Activated naive CD4-positive, alpha-beta T cell treated with anti-CD3 and anti-CD28 coated beads for 36 hours (primary cell): ENCODE measurements at regions of chr2 and their contacts with region 1.

Region 1: DNA sequence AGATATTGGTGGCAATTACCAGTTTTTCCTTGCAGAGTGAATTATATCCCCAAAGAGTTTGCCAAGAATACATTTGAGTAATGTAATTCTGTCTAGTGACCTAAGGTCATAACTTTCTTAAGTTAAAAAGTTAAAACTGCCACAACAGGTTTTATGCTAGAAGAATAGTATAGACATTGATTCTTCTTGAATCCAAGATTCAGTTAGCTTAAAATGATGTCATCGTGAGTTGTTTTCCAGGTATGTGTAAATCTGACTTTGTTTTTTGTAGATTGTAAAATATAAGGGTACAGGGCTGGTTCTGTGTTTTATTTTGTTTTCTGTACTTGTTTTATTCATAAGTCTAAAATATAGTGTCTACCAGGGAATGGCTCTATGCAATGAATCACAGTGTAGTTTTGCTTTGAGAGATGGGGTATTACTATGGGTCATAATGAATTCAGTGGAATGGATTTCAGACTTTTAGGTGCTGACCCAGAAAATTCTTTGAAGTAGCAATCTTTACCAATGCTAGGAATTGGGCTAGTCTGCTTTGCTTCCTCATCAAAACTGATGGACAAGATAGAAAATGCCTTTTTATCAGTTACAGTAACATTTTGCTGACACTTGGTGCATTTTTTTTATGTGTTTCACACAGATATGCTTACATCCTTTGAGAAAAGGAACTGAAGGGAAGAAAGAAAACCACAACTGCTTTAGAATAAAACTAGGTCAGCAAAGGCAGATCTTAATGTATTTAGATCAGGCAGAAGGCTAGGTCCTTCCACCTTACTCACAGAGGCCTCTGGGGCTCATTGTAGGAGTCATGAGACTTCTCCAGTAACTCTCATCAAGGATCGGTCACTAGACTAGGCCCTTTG is 20.8 kb upstream of the MGAT5 start:
- DNase-seq: peak; percentile 47
- H3K4me3 Mint-ChIP-seq: no peak overlapping the region
- H3K27ac Mint-ChIP-seq: peak overlapping the region; percentile 80
- H3K4me1 Mint-ChIP-seq: peaks cover 70% of the 10 kb centered on the region
- H3K27me3 Mint-ChIP-seq: no peaks in the 10 kb centered on the region

Region 2: GRCh38 chr2:134127496-134127895 is 105.6 kb before region 1 on chr2:
- CTCF ChIA-PET with region 1: no interaction called
- intact Hi-C with region 1: loop called (anchors 2 kb)
- DNase-seq: peak; percentile 84
- H3K4me3 Mint-ChIP-seq: no peak overlapping the region
- H3K27ac Mint-ChIP-seq: no peak overlapping the region
- H3K4me1 Mint-ChIP-seq: peaks cover 61% of the 10 kb centered on the region
- H3K27me3 Mint-ChIP-seq: no peaks in the 10 kb centered on the region

Region 3: DNA sequence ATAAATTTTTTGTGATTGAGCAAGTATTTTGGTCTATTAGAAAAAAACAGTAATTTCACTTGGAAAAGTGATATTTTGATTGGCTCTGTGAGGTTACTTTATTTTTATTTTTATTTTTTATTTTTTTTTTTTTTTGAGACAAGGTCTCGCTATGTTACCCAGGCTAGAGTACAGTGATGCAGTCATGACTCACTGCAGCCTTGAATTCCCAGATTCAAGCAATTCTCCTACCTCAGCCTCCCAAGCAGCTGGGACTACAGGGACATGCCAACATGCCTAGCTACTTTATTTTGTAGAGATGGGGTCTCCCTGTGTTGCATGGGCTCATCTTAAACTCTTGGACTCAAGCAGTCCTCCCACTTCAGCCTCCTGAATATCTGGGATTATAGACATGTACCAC is 40.1 kb before region 1 on chr2:
- CTCF ChIA-PET with region 1: interaction called, 4 read pairs
- intact Hi-C with region 1: loop called (anchors 1 kb)
- DNase-seq: no peak
- H3K4me3 Mint-ChIP-seq: no peak overlapping the region
- H3K27ac Mint-ChIP-seq: no peak overlapping the region
- H3K4me1 Mint-ChIP-seq: peaks cover 56% of the 10 kb centered on the region
- H3K27me3 Mint-ChIP-seq: no peaks in the 10 kb centered on the region

Region 4: DNA sequence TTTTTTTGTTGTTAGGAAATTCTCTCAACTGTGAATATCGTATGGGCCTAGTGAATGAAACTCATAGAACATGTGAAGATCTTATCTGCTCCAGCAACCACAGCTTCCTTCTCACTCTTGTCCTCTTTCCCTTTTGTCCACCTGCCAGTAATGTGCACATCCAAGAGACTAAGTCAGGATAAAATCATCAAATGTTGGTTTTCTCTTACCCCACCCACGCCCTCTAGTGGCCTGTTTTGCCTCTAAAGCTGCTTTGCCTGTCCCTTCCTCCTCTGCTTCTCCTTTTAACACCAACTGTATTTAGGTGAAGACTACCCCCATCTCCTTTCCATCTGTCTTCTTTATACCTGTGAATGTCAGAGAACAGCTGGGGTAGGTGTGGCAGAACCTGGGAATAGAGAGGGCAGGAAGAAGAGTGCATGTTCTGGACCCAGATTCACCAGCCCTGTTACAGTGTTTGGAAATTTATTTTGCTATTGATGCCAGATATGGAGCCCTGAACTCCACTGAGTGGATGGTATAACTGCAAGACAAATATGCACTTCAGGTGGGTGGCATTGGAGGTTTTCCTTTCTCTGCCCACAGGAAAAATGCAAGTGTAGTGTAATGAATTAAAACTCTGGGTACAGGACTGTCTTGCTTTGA is 12.4 kb after region 1 on chr2:
- CTCF ChIA-PET with region 1: interaction called, 26 read pairs
- intact Hi-C with region 1: loop called (anchors 1 kb)
- DNase-seq: peak; percentile 90
- H3K4me3 Mint-ChIP-seq: no peak overlapping the region
- H3K27ac Mint-ChIP-seq: no peak overlapping the region
- H3K4me1 Mint-ChIP-seq: peaks cover 68% of the 10 kb centered on the region
- H3K27me3 Mint-ChIP-seq: no peaks in the 10 kb centered on the region

Region 5: GRCh38 chr2:134282629-134283400 is 49.7 kb after region 1 on chr2:
- CTCF ChIA-PET with region 1: no interaction called
- intact Hi-C with region 1: loop called (anchors 1 kb)
- DNase-seq: peak; percentile 73
- H3K4me3 Mint-ChIP-seq: no peak overlapping the region
- H3K27ac Mint-ChIP-seq: peak overlapping the region; percentile 44
- H3K4me1 Mint-ChIP-seq: peaks cover 36% of the 10 kb centered on the region
- H3K27me3 Mint-ChIP-seq: no peaks in the 10 kb centered on the region

Region 6: GRCh38 chr2:134301099-134301927 is 68.2 kb after region 1 on chr2:
- CTCF ChIA-PET with region 1: no interaction called
- intact Hi-C with region 1: loop called (anchors 1 kb)
- DNase-seq: no peak
- H3K4me3 Mint-ChIP-seq: peak overlapping the region; percentile 5
- H3K27ac Mint-ChIP-seq: no peak overlapping the region
- H3K4me1 Mint-ChIP-seq: peaks cover 46% of the 10 kb centered on the region
- H3K27me3 Mint-ChIP-seq: no peaks in the 10 kb centered on the region